GM10248 (cell line): ENCODE measurements at regions of chr17 and their contacts with region 1.

Region 1: DNA sequence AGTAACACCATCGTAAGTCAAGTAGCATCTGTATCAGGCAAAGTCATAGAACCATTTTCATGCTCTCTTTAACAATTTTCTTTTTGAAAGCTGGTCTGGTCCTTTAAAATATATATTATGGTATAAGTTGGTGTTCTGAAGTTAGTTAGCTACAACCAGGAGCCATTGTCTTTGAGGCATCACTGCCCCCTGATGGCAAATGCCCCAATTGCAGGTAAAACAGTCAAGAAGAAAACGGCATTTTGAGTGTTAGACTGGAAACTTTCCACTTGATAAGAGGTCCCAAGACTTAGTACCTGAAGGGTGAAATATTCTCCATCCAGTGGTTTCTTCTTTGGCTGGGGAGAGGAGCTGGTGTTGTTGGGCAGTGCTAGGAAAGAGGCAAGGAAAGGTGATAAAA is 14.1 kb downstream of the TP53 start:
- DNase-seq: no peak
- CTCF ChIP-seq: peak; percentile 27

Region 2: GRCh38 chr17:7650509-7651096 is 22.6 kb before region 1 on chr17 and contains the start of gene ATP1B2:
- CTCF ChIA-PET with region 1: interaction called, 10 read pairs
- POLR2A ChIA-PET with region 1: interaction called, 4 read pairs
- DNase-seq: peak; percentile 83
- CTCF ChIP-seq: no peak

Region 3: GRCh38 chr17:7703584-7704479 is 30.6 kb after region 1 on chr17:
- CTCF ChIA-PET with region 1: no interaction called
- POLR2A ChIA-PET with region 1: no interaction called
- DNase-seq: no peak
- CTCF ChIP-seq: no peak